Activated naive CD8-positive, alpha-beta T cell treated with anti-CD3 and anti-CD28 coated beads, Interleukin-2, amount 10 ng/mL, durations not matched to agents 7 days and 5 days (primary cell): ENCODE measurements at regions of chr20 and their contacts with region 1.

Region 1: GRCh38 chr20:18496740-18497592 is at the start of gene RBBP9:
- DNase-seq: peak; percentile 79
- ATAC-seq: peak; percentile 100
- H3K4me3 Mint-ChIP-seq: peak within 1 kb of the TSS; percentile 97
- H3K27ac Mint-ChIP-seq: peak within 1 kb of the TSS; percentile 82
- H3K4me1 Mint-ChIP-seq: peaks cover 13% of the 10 kb centered on the region
- H3K27me3 Mint-ChIP-seq: no peaks in the 10 kb centered on the region
- total RNA-seq, gene RBBP9: 13.9 to 15.2 TPM

Region 2: GRCh38 chr20:18466894-18467730 is 29.9 kb before region 1 on chr20 and contains the starts of genes DZANK1 and POLR3F:
- POLR2A ChIA-PET with region 1: interaction called, 16 read pairs
- DNase-seq: peak; percentile 94
- ATAC-seq: peak; percentile 98
- H3K4me3 Mint-ChIP-seq: peak within 1 kb of the TSS; percentile 99
- H3K27ac Mint-ChIP-seq: peak within 1 kb of the TSS; percentile 92
- H3K4me1 Mint-ChIP-seq: peaks cover 20% of the 10 kb centered on the region
- H3K27me3 Mint-ChIP-seq: no peaks in the 10 kb centered on the region
- total RNA-seq, gene DZANK1: 1.8 to 2.2 TPM
- total RNA-seq, gene POLR3F: 8.3 to 8.5 TPM